ENCODE measurements at regions of chr4 and their contacts with region 1.

Region 1: GRCh38 chr4:77600521-77601451 is 4.8 kb upstream of the CXCL13 start:
- DNase-seq: peak; percentile 29
- ATAC-seq: peak; percentile 88
- H3K4me3 Mint-ChIP-seq: no peak overlapping the region
- H3K27ac Mint-ChIP-seq: no peak overlapping the region
- H3K4me1 Mint-ChIP-seq: no peaks in the 10 kb centered on the region
- H3K27me3 Mint-ChIP-seq: no peaks in the 10 kb centered on the region
- CTCF ChIP-seq: peak; percentile 62; the same call in 1 of the 2 replicates

Region 2: DNA sequence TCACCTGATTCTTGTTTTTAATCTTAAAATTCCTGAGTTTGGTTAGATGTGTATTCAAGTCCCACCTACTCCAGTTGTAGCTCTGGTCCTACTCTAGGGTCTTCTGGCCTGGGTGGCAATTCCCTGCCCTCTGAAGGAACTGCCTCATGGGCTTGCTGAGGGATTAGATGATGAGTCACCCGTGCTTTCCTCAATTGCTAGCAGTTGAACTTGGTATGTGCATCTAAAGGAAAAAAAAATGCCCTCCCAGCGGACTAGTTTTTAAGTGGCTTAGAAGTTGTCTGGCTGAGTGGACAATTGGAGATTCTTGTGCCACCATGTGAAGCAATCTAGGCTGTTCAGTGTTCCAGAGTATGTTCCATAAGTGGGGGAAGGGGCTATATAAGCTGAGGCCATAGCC is 316.8 kb before region 1 on chr4:
- CTCF ChIA-PET with region 1: no interaction called
- POLR2A ChIA-PET with region 1: no interaction called
- DNase-seq: no peak
- ATAC-seq: no peak
- H3K4me3 Mint-ChIP-seq: no peak overlapping the region
- H3K27ac Mint-ChIP-seq: no peak overlapping the region
- H3K4me1 Mint-ChIP-seq: no peaks in the 10 kb centered on the region
- H3K27me3 Mint-ChIP-seq: peaks cover 35% of the 10 kb centered on the region
- CTCF ChIP-seq: no peak

Region 3: DNA sequence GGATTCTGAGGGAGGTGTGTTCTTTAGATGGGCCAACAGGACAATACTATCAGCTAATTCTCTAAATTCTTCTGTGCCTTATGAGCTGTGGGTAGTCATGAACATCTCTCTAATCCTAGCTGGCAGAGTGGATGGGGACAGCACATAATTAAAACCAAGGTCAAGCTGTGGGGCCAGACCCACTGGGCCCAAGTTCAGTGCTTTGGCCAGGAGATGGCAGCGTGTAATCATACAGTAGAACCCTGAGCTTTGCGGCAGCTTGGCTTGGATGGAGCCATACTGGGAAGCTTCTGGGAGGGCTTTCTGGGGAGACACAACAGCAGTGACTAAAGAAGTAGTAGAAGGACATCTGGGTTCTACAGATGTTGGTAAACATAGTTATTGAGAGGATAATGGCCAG is 135.5 kb before region 1 on chr4:
- CTCF ChIA-PET with region 1: interaction called, 26 read pairs
- POLR2A ChIA-PET with region 1: no interaction called
- DNase-seq: peak; percentile 50
- ATAC-seq: peak; percentile 77
- H3K4me3 Mint-ChIP-seq: no peak overlapping the region
- H3K27ac Mint-ChIP-seq: no peak overlapping the region
- H3K4me1 Mint-ChIP-seq: no peaks in the 10 kb centered on the region
- H3K27me3 Mint-ChIP-seq: peaks cover 12% of the 10 kb centered on the region
- CTCF ChIP-seq: no peak

Region 4: DNA sequence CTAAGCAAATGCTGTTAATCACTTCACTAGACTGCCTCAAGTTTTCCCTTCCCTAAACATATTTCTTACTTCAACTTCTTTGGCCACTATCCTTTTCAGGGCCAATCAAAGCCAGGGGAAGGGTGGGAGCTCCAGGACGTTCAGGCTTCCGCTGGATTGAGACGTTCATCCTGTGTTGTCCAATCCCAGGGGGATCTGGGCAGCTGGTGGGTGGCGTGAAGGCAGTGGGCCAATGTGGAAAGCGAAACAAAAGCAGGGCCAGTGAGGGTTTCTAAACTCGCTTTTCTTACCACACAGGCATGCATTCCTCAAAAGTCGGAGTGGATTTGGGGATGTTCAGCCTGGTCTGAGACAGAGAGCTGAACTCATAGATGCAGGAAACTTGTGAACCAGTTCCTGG is 12.5 kb after region 1 on chr4:
- CTCF ChIA-PET with region 1: interaction called, 14 read pairs
- POLR2A ChIA-PET with region 1: no interaction called
- DNase-seq: no peak
- ATAC-seq: no peak
- H3K4me3 Mint-ChIP-seq: no peak overlapping the region
- H3K27ac Mint-ChIP-seq: no peak overlapping the region
- H3K4me1 Mint-ChIP-seq: no peaks in the 10 kb centered on the region
- H3K27me3 Mint-ChIP-seq: no peaks in the 10 kb centered on the region
- CTCF ChIP-seq: no peak

Region 5: DNA sequence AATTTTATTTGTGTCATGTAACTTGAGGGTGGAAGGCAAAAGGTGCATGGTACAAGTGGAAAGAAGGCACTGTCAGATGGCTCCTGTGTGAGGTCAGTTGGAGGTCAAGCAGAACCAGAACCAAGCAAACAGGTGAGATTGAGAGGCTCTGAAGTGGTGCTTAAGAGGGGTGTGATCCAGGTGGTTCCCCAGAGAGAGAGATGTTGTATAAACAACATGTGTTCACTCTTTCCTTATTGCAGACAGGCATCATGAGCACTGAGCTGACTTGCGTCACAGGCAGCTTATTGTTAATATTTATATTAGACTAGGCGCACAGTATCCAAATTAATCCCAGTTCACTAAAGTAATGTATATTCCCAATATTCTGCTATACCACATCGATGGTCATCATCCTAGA is 61.6 kb after region 1 on chr4:
- CTCF ChIA-PET with region 1: no interaction called
- POLR2A ChIA-PET with region 1: no interaction called
- DNase-seq: no peak
- ATAC-seq: no peak
- H3K4me3 Mint-ChIP-seq: no peak overlapping the region
- H3K27ac Mint-ChIP-seq: no peak overlapping the region
- H3K4me1 Mint-ChIP-seq: no peaks in the 10 kb centered on the region
- H3K27me3 Mint-ChIP-seq: peaks cover 5% of the 10 kb centered on the region
- CTCF ChIP-seq: no peak

Region 6: GRCh38 chr4:77852892-77853495 is 252.2 kb after region 1 on chr4:
- CTCF ChIA-PET with region 1: no interaction called
- POLR2A ChIA-PET with region 1: no interaction called
- DNase-seq: no peak
- ATAC-seq: no peak
- H3K4me3 Mint-ChIP-seq: no peak overlapping the region
- H3K27ac Mint-ChIP-seq: no peak overlapping the region
- H3K4me1 Mint-ChIP-seq: peaks cover under 1% of the 10 kb centered on the region
- H3K27me3 Mint-ChIP-seq: no peaks in the 10 kb centered on the region
- CTCF ChIP-seq: no peak

Measured in WTC11 (cell line).